B cell (primary cell): ENCODE measurements at regions of chr13 and their contacts with region 1.

Region 1: GRCh38 chr13:91922969-91923592 is 524.7 kb downstream of the GPC5 start:
- DNase-seq: no peak
- ATAC-seq: no peak
- H3K4me3 ChIP-seq: no peak overlapping the region
- H3K4me3 Mint-ChIP-seq: no peak overlapping the region
- H3K27ac ChIP-seq: no peak overlapping the region
- H3K27ac Mint-ChIP-seq: no peak overlapping the region
- H3K4me1 ChIP-seq: no peaks in the 10 kb centered on the region
- H3K4me1 Mint-ChIP-seq: no peaks in the 10 kb centered on the region
- H3K27me3 ChIP-seq: no peaks in the 10 kb centered on the region
- H3K27me3 Mint-ChIP-seq: no peaks in the 10 kb centered on the region
- CTCF ChIP-seq: no peak

Region 2: GRCh38 chr13:91693466-91693865 is 229.6 kb before region 1 on chr13:
- CTCF ChIA-PET with region 1: no interaction called
- POLR2A ChIA-PET with region 1: no interaction called
- intact Hi-C with region 1: no loop called
- DNase-seq: no peak
- ATAC-seq: no peak
- H3K4me3 ChIP-seq: no peak overlapping the region
- H3K4me3 Mint-ChIP-seq: no peak overlapping the region
- H3K27ac ChIP-seq: no peak overlapping the region
- H3K27ac Mint-ChIP-seq: no peak overlapping the region
- H3K4me1 ChIP-seq: no peaks in the 10 kb centered on the region
- H3K4me1 Mint-ChIP-seq: no peaks in the 10 kb centered on the region
- H3K27me3 ChIP-seq: no peaks in the 10 kb centered on the region
- H3K27me3 Mint-ChIP-seq: no peaks in the 10 kb centered on the region
- CTCF ChIP-seq: no peak

Region 3: DNA sequence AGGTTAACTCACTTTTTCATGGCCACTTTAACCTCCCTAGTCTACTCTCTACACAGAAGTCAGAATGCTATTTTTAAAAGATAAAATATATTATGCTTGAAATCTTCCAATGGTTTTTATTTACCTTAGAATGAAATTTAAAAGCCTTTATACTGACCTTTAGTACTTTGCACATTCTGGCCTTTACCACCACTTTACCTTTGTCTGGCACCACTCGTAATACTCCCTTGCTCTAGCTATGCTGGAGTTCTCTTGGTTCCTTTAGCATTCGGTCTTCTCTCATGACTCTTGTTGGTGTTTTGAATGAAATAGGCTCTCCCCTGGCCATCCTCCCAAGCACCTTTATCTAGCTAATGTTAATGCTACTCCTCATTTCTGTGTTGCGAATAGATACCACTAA is 213.9 kb before region 1 on chr13:
- CTCF ChIA-PET with region 1: no interaction called
- POLR2A ChIA-PET with region 1: no interaction called
- intact Hi-C with region 1: loop called (anchors 5 kb)
- DNase-seq: no peak
- ATAC-seq: no peak
- H3K4me3 ChIP-seq: no peak overlapping the region
- H3K4me3 Mint-ChIP-seq: no peak overlapping the region
- H3K27ac ChIP-seq: no peak overlapping the region
- H3K27ac Mint-ChIP-seq: no peak overlapping the region
- H3K4me1 ChIP-seq: no peaks in the 10 kb centered on the region
- H3K4me1 Mint-ChIP-seq: no peaks in the 10 kb centered on the region
- H3K27me3 ChIP-seq: no peaks in the 10 kb centered on the region
- H3K27me3 Mint-ChIP-seq: no peaks in the 10 kb centered on the region
- CTCF ChIP-seq: no peak